ENCODE measurements at regions of chr20 and their contacts with region 1.

Region 1: DNA sequence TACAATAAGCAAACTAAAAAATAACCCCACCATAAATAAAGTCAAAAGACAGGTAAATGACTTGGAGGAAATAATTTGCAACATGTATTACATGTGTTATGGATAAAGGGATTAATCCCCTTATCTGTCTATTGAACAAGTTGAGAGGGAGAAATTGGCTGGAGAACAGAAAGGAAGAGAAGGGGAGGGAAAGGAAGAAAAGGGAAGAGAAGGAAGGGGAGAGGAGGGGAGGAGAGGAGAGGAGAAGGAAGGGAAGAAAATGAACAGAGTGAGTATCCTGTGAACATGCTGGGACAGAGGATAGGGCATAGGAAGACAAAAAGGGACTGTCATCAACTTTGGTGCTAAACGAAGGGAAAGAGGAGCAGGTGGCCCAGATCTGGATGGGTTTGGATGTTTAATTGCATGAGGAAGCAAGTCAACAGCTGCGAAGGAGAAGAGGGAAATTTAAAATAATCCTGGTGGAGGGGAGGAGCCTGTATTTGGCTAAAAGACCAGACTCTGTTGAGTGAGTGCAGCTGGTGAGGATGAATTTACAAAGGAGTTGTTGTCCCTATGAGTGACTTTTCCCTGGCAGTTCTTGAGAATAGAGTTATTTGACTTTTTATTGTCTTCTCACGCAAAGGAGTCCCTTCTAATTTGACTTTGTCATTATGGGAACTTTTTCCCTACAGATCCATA is 14.2 kb upstream of the SHLD1 start:
- DNase-seq: no peak
- H3K4me3 Mint-ChIP-seq: no peak overlapping the region
- H3K27ac Mint-ChIP-seq: no peak overlapping the region
- H3K4me1 Mint-ChIP-seq: peaks cover 28% of the 10 kb centered on the region
- H3K27me3 Mint-ChIP-seq: no peaks in the 10 kb centered on the region

Region 2: GRCh38 chr20:5650280-5650691 is 85.7 kb before region 1 on chr20:
- CTCF ChIA-PET with region 1: no interaction called
- intact Hi-C with region 1: loop called (anchors 2 kb)
- DNase-seq: no peak
- H3K4me3 Mint-ChIP-seq: no peak overlapping the region
- H3K27ac Mint-ChIP-seq: peak overlapping the region; percentile 33
- H3K4me1 Mint-ChIP-seq: peaks cover 42% of the 10 kb centered on the region
- H3K27me3 Mint-ChIP-seq: no peaks in the 10 kb centered on the region

Region 3: DNA sequence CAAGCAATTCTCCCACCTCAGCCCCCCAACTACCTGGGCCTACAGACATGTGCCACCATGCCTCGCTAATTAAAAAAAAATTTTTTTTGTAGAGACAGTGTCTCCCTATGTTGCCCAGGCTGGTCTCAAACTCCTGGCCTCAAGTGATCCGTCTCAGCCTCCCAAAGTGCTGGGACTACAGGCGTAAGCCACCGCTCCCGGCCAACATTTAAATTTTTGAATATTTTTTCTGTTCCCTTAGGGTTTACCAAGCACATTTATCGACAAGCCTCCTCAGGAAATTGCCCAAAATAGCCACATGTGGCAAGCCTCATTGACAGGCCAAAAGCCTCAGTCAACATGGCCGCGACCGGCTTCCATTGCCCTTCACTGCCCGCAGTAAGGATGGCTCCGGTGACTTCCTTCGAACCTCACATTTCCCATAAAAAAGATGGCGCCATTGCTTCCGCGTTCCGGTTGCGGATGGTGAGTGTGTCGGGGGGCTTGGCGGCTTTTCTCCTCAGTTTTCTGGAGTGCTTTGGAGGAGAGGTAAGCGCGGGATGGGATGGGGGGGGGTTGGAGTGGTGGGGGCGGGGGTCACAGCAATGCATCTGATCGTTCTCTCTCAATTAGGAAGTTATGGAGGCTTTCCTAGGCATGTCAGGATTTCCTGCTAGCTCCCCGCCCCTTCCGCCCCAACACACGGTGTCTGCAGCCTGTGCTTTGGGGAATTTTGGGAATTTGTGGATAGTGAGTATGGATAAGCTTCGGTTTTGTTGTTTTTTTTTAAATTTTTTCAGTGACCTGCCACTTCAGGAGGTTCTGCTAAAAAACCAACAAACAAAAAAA is 14.2 kb after region 1 on chr20 and contains the start of gene SHLD1:
- CTCF ChIA-PET with region 1: no interaction called
- intact Hi-C with region 1: loop called (anchors 1 kb)
- DNase-seq: peak; percentile 89
- H3K4me3 Mint-ChIP-seq: peak within 1 kb of the TSS; percentile 93
- H3K27ac Mint-ChIP-seq: peak within 1 kb of the TSS; percentile 97
- H3K4me1 Mint-ChIP-seq: peaks cover 17% of the 10 kb centered on the region
- H3K27me3 Mint-ChIP-seq: no peaks in the 10 kb centered on the region
- total RNA-seq, gene SHLD1: 10.1 TPM

Measured in activated naive CD4-positive, alpha-beta T cell treated with anti-CD3 and anti-CD28 coated beads for 36 hours (primary cell).